ENCODE measurements at regions of chr2 and their contacts with region 1.

Region 1: DNA sequence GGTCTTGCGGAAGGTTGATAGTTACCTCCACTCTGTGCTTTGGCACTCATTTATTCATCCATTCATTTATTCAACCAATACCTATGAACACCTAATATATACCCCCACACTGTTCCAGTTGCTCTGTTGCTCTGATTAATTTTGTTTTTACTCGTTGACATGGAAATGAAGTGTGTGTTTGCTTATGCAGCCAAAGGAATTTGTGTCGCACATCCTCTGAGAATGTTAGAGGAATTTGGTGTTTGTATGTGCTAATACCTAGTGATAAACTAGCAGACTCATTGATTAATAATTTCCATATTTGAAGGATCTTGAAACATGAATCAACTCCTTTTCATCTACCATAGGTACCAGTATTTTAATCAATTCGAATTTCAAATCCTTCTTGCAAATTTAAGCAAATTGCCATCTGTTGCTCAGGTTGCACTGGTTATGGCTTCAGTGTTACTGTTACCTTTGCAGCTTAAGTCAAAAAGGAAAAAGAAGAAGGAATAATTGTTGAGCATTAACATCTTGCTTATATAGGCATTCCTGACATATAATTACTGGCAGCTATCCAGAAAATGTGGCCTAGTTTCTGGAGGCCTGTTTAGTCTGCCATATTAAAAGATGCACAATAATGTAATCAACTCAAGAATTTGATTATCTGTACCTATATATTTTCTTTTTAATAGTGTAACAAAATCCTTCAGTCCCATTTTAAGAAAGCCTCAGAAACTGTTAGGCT is 25.7 kb upstream of the CRIM1 start:
- DNase-seq: peak; percentile 60
- H3K4me3 ChIP-seq: no peak overlapping the region
- H3K27ac ChIP-seq: peak overlapping the region; percentile 50
- H3K4me1 ChIP-seq: peaks cover 22% of the 10 kb centered on the region
- H3K27me3 ChIP-seq: no peaks in the 10 kb centered on the region
- CTCF ChIP-seq: no peak

Region 2: GRCh38 chr2:35495182-35495581 is 834.7 kb before region 1 on chr2:
- CTCF ChIA-PET with region 1: no interaction called
- dilution Hi-C with region 1: no loop called
- in situ Hi-C with region 1: loop called in 1 of 2 experiments (anchors 25 kb)
- intact Hi-C with region 1: no loop called
- DNase-seq: no peak
- H3K4me3 ChIP-seq: no peak overlapping the region
- H3K27ac ChIP-seq: no peak overlapping the region
- H3K4me1 ChIP-seq: peaks cover 4% of the 10 kb centered on the region
- H3K27me3 ChIP-seq: no peaks in the 10 kb centered on the region
- CTCF ChIP-seq: no peak

Region 3: GRCh38 chr2:35547984-35548570 is 781.8 kb before region 1 on chr2:
- CTCF ChIA-PET with region 1: no interaction called
- dilution Hi-C with region 1: no loop called
- in situ Hi-C with region 1: no loop called
- intact Hi-C with region 1: no loop called
- DNase-seq: peak; percentile 66
- H3K4me3 ChIP-seq: no peak overlapping the region
- H3K27ac ChIP-seq: no peak overlapping the region
- H3K4me1 ChIP-seq: no peaks in the 10 kb centered on the region
- H3K27me3 ChIP-seq: no peaks in the 10 kb centered on the region
- CTCF ChIP-seq: no peak